ENCODE measurements at regions of chr10 and their contacts with region 1.

Region 1: GRCh38 chr10:33320288-33320687 is 14.2 kb downstream of the NRP1 start:
- DNase-seq: no peak
- ATAC-seq: no peak
- H3K4me3 ChIP-seq: no peak overlapping the region
- H3K27ac ChIP-seq: 0 out of 2 replicates have a peak overlapping the region, but pooled peaks have one; percentile 65
- H3K4me1 ChIP-seq: peaks cover 42% of the 10 kb centered on the region
- H3K27me3 ChIP-seq: no peaks in the 10 kb centered on the region
- CTCF ChIP-seq: no peak

Region 2: GRCh38 chr10:34251177-34251576 is 930.9 kb after region 1 on chr10:
- CTCF ChIA-PET with region 1: no interaction called
- POLR2A ChIA-PET with region 1: interaction called, 10 read pairs
- in situ Hi-C with region 1: no loop called
- intact Hi-C with region 1: no loop called
- DNase-seq: no peak
- ATAC-seq: no peak
- H3K4me3 ChIP-seq: no peak overlapping the region
- H3K27ac ChIP-seq: no peak overlapping the region
- H3K4me1 ChIP-seq: no peaks in the 10 kb centered on the region
- H3K27me3 ChIP-seq: no peaks in the 10 kb centered on the region
- CTCF ChIP-seq: no peak

Measured in Panc1 (cell line).